ENCODE measurements at regions of chr19 and their contacts with region 1.

Region 1: GRCh38 chr19:14048443-14049153 is 13.3 kb downstream of the PALM3 start:
- DNase-seq: peak; percentile 42 to 67
- ATAC-seq: peak in 6 of 8 donors; percentile 41 to 71 (median 60)
- H3K4me3 ChIP-seq: no peak overlapping the region
- H3K27ac ChIP-seq: no peak overlapping the region
- H3K4me1 ChIP-seq: no peaks in the 10 kb centered on the region
- H3K27me3 ChIP-seq: no peaks in the 10 kb centered on the region
- CTCF ChIP-seq: peak; percentile 64 to 95 (median 81)

Region 2: GRCh38 chr19:13597640-13598039 is 451.0 kb before region 1 on chr19:
- intact Hi-C with region 1: loop called in 1 of 10 experiments (anchors 10 kb)
- DNase-seq: peak in 1 of 2 donors; percentile 48
- ATAC-seq: peak; percentile 68 to 92 (median 78)
- H3K4me3 ChIP-seq: no peak overlapping the region
- H3K27ac ChIP-seq: no peak overlapping the region
- H3K4me1 ChIP-seq: no peaks in the 10 kb centered on the region
- H3K27me3 ChIP-seq: peaks cover 0 to 52% (median 22%) of the 10 kb centered on the region in 7 donors
- CTCF ChIP-seq: peak; percentile 27 to 76 (median 65)

Region 3: DNA sequence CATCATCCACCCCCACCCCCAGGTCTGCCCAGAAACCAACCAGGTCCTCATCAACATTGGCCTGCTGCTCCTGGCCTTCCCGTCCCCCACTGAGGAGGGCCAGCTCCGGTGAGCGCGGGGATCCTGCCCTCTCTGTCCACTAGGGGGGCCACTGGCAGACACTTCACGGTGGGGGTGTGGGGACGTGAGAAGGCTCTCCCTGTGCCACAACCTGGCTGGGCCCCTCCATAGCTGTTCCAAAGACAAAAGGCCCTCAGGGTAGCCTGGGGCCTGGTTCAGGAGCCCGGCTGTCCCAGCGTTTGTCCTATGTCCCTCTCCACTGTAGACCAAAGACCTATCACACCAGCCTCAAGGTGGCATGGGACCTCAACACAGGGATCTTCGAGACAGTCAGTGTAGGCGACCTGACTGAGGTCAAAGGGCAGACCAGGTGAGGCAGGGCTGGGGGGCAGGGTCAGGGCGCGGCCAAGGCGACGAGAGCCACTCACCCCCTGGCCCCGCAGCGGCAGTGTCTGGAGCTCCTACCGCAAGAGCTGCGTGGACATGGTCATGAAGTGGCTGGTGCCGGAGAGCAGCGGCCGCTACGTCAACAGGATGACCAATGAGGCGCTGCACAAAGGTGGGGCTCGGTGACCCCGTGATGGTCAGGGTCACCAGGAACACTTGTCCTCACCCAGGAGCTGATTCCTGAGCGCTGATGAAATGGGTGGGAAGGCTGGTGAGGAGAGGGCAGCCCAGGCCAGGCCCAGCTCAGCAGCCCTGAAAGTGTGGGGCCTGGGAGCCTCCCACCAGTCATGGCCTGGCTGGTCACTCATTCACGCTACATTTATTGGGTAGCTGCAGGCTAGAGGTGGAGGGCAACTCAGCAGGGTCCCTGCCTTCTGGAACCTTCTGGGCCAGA is 88.4 kb before region 1 on chr19:
- intact Hi-C with region 1: loop called in 2 of 10 experiments (anchors 10 kb)
- DNase-seq: no peak
- ATAC-seq: peak in 1 of 8 donors; percentile 29
- H3K4me3 ChIP-seq: no peak overlapping the region
- H3K27ac ChIP-seq: no peak overlapping the region
- H3K4me1 ChIP-seq: peaks cover 0 to 22% (median 0%) of the 10 kb centered on the region in 9 donors
- H3K27me3 ChIP-seq: no peaks in the 10 kb centered on the region
- CTCF ChIP-seq: peak in 5 of 9 donors; percentile 9 to 31 (median 26)

Region 4: DNA sequence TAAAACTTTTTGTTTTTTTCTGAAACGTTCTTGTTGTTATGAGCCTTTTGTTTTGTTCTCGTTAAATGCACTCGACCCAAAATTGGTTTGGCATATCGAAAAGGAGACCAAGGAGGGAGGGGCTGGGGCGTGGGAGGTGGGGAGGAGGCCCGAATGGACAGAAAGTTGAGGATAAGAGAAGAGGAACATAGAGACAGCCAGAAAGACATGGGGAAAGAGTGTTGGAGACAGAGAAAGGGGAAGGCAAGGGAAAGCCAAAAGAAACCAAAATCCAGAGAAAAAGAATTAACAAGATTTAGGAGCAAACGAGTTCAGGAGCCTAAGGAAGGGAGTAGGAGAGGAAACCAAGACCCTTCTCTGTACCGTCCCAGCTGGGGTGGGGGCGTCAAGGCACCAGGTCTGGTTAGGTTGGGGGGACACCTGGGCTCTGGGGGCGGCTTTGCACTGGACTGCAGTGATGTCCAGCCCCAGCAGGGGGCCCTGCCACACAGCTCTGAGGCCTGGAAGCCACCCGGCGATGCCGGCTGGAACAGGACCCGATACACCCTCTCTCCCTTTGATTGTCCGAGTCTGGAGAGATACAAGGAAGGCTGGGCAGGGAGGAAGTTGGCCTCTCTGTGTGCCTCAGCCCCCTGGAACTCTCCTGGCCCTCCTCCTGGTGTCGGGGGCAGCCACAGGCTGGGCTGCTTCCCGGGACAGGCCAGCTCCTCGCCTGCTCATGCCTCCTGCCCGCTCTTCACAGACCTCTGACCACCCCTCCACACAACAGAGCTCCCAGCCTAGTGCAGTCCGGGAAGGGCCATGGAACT is 99.4 kb after region 1 on chr19:
- intact Hi-C with region 1: no loop called
- DNase-seq: peak; percentile 74 to 79
- ATAC-seq: peak; percentile 84 to 91 (median 86)
- H3K4me3 ChIP-seq: peak overlapping the region in 2 of 10 donors; percentile 24 to 33
- H3K27ac ChIP-seq: peak overlapping the region; percentile 25 to 90 (median 86)
- H3K4me1 ChIP-seq: peaks cover 2 to 47% (median 32%) of the 10 kb centered on the region in 9 donors
- H3K27me3 ChIP-seq: no peaks in the 10 kb centered on the region
- CTCF ChIP-seq: peak; percentile 77 to 95 (median 89)

Measured in heart right ventricle (tissue), 16 donors.